CD8-positive, alpha-beta T cell (primary cell): ENCODE measurements at regions of chr2 and their contacts with region 1.

Region 1: DNA sequence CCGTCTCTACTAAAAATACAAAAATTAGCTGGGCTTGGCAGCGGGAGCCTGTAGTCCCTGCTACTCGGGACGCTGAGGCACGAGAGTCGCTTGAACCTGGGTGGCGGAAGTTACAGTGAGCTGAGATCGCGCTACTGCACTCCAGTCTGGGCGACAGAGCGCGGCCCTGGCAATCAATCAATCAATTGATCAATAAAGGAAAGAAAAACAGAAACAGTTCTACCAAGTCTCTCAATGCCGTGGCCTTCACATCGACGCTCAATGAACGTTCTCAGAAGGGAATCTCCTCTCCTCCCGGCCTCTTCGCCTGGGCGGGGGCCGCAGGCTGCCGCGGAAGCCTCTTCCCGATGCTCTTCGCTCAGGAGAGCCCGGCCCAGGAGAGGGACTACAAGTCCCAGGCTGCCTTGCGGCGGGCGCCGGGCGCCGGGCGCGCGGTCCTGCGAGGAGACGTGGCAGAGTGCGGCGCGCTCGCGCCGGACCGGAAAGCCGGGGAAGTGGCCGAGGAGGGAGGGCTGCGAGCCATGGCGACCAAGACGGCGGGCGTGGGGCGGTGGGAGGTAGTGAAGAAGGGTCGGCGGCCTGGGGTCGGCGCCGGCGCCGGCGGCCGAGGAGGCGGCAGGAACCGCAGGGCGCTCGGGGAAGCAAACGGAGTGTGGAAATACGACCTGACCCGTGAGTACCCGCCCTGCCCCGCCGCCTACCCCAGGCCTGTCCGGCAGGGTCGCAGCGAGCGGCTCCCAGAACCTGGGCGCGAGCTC is at the start of gene TMEM214:
- DNase-seq: peak; percentile 44 to 87 (median 77)
- ATAC-seq: peak; percentile 94
- H3K4me3 ChIP-seq: peak within 1 kb of the TSS; percentile 84 to 97
- H3K4me3 Mint-ChIP-seq: peak within 1 kb of the TSS; percentile 95
- H3K27ac ChIP-seq: peak within 1 kb of the TSS; percentile 67 to 78
- H3K27ac Mint-ChIP-seq: peak within 1 kb of the TSS; percentile 91
- H3K4me1 ChIP-seq: peaks cover 20% of the 10 kb centered on the region
- H3K4me1 Mint-ChIP-seq: peaks cover 39% of the 10 kb centered on the region
- H3K27me3 ChIP-seq: no peaks in the 10 kb centered on the region
- H3K27me3 Mint-ChIP-seq: no peaks in the 10 kb centered on the region
- CTCF ChIP-seq: no peak
- total RNA-seq, gene TMEM214: 26.5 to 27.4 TPM

Region 2: GRCh38 chr2:26785431-26786206 is 247.1 kb before region 1 on chr2 and contains the start of gene CENPA:
- CTCF ChIA-PET with region 1: no interaction called
- POLR2A ChIA-PET with region 1: no interaction called
- intact Hi-C with region 1: loop called in 1 of 2 experiments (anchors 10 kb)
- DNase-seq: peak; percentile 92 to 99 (median 94)
- ATAC-seq: peak; percentile 99
- H3K4me3 ChIP-seq: peak within 1 kb of the TSS; percentile 52 to 63
- H3K4me3 Mint-ChIP-seq: peak within 1 kb of the TSS; percentile 84
- H3K27ac ChIP-seq: peak within 1 kb of the TSS; percentile 58 to 61
- H3K27ac Mint-ChIP-seq: peak within 1 kb of the TSS; percentile 88
- H3K4me1 ChIP-seq: peaks cover 16% of the 10 kb centered on the region
- H3K4me1 Mint-ChIP-seq: peaks cover 12% of the 10 kb centered on the region
- H3K27me3 ChIP-seq: no peaks in the 10 kb centered on the region
- H3K27me3 Mint-ChIP-seq: peaks cover 11% of the 10 kb centered on the region
- CTCF ChIP-seq: no peak
- total RNA-seq, gene CENPA: 0.39 to 0.62 TPM

Region 3: DNA sequence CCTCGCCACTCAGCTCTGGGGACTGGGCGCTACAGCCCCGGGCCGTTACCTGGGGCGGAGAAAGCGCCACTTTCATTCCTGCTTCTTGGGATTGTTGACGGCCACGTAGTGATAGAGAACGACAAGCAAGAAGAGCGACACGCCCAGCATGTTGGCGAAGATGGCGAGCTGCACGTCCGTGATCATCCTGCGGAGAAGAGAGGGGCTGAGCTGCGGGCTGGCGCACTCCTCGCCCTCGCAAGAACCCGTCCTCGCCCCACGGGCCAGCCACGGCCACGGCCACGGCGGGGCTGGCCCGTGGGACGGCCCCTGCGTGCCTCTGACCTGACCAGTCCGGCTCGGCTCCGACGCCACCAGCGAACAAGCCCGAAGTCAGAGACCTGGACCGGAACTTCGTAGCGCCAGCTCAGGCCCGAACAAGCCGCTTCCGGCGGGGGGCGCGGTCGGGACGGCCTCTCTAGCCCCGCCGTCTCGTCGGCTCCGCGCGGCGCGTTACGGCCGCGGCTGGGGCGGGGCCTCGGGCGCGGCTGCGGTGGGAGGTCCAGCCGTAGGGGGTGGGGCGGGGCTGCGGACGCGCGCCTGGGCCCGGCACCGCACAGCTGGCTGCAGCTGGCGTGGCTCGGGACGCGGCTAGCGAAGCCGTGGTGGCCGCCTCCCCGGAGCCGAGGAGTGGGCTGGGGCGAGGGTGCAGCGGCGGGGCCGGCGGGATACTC is 38.8 kb after region 1 on chr2 and contains the start of gene OST4:
- CTCF ChIA-PET with region 1: no interaction called
- POLR2A ChIA-PET with region 1: interaction called, 8 read pairs
- intact Hi-C with region 1: loop called (anchors 1 kb)
- DNase-seq: peak; percentile 74 to 94 (median 88)
- ATAC-seq: peak; percentile 88
- H3K4me3 ChIP-seq: peak within 1 kb of the TSS; percentile 84 to 93
- H3K4me3 Mint-ChIP-seq: peak within 1 kb of the TSS; percentile 98
- H3K27ac ChIP-seq: peak within 1 kb of the TSS; percentile 92 to 98
- H3K27ac Mint-ChIP-seq: peak within 1 kb of the TSS; percentile 98
- H3K4me1 ChIP-seq: peaks cover 46% of the 10 kb centered on the region
- H3K4me1 Mint-ChIP-seq: peaks cover 76% of the 10 kb centered on the region
- H3K27me3 ChIP-seq: no peaks in the 10 kb centered on the region
- H3K27me3 Mint-ChIP-seq: no peaks in the 10 kb centered on the region
- CTCF ChIP-seq: no peak
- total RNA-seq, gene OST4: 252 to 260 TPM

Region 4: DNA sequence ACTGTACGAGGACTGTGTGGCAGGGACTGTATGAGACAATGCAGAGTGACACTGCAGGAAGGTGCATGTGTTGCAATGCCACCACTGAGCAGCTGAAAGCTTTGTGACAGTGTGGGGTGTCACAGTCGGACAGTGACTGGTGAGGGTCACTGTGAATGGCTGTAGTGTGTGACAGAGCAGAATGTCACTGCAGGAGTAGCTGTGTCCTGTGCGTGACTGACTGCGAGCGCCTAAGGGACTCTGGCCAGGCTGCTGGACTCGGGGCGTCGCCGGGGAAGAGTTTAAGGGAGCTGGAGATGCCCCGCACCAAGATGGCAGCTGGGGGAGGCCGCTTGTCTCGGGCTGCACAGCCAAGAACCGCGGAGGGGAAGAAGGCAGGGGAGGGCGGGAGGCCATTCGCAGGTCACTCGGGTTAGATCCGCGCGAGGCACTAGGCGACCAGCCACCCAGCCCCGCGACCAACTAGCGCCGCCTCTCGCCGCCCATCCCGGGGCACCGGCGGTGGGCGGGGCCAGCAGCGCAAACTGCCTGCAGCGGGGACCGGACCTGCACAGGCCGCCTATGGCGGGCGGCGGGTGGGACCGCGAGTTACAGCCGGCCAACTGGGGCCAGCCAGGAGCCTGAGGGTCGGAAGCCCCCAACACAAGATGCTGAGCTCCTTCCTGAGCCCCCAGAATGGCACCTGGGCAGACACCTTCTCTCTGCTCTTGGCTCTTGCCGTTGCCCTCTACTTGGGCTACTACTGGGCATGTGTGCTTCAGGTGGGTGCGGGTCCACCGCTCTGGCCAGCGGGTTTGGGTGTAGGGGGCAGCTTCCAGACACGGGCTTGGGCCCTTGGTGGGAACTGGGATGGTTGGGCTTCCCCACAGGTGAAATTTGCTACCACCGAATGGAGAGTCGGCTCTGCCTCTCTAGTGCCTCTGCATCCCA is 90.9 kb after region 1 on chr2 and contains the start of gene ABHD1:
- CTCF ChIA-PET with region 1: no interaction called
- POLR2A ChIA-PET with region 1: no interaction called
- intact Hi-C with region 1: loop called in 1 of 2 experiments (anchors 5 kb)
- DNase-seq: peak; percentile 19 to 82 (median 68)
- ATAC-seq: peak; percentile 83
- H3K4me3 ChIP-seq: peak within 1 kb of the TSS; percentile 41 to 68
- H3K4me3 Mint-ChIP-seq: peak within 1 kb of the TSS; percentile 92
- H3K27ac ChIP-seq: peak within 1 kb of the TSS in 1 of 2 experiments; percentile 62
- H3K27ac Mint-ChIP-seq: peak within 1 kb of the TSS; percentile 81
- H3K4me1 ChIP-seq: peaks cover 14% of the 10 kb centered on the region
- H3K4me1 Mint-ChIP-seq: peaks cover 22% of the 10 kb centered on the region
- H3K27me3 ChIP-seq: peaks cover under 1 to 4% of the 10 kb centered on the region in 2 experiments
- H3K27me3 Mint-ChIP-seq: peaks cover 13% of the 10 kb centered on the region
- CTCF ChIP-seq: no peak
- total RNA-seq, gene ABHD1: 0.67 to 1.0 TPM

Region 5: GRCh38 chr2:27217217-27218121 is 184.8 kb after region 1 on chr2 and contains the start of gene CAD:
- CTCF ChIA-PET with region 1: no interaction called
- POLR2A ChIA-PET with region 1: interaction called, 3 read pairs
- intact Hi-C with region 1: loop called (anchors 1 to 5 kb)
- DNase-seq: peak; percentile 69 to 92 (median 85)
- ATAC-seq: peak; percentile 77
- H3K4me3 ChIP-seq: peak within 1 kb of the TSS; percentile 84
- H3K4me3 Mint-ChIP-seq: peak within 1 kb of the TSS; percentile 96
- H3K27ac ChIP-seq: peak within 1 kb of the TSS; percentile 66 to 78
- H3K27ac Mint-ChIP-seq: peak within 1 kb of the TSS; percentile 94
- H3K4me1 ChIP-seq: peaks cover 25% of the 10 kb centered on the region
- H3K4me1 Mint-ChIP-seq: peaks cover 45% of the 10 kb centered on the region
- H3K27me3 ChIP-seq: no peaks in the 10 kb centered on the region
- H3K27me3 Mint-ChIP-seq: no peaks in the 10 kb centered on the region
- CTCF ChIP-seq: no peak
- total RNA-seq, gene CAD: 24.7 to 31.4 TPM